ENCODE measurements at regions of chr12 and their contacts with region 1.

Region 1: GRCh38 chr12:93569656-93570551 is 2.6 kb upstream of the SOCS2 start:
- DNase-seq: peak; percentile 76
- ATAC-seq: peak; percentile 66
- H3K4me3 ChIP-seq: peak overlapping the region; percentile 90
- H3K27ac ChIP-seq: peak overlapping the region; percentile 61
- H3K4me1 ChIP-seq: peaks cover 16% of the 10 kb centered on the region
- H3K27me3 ChIP-seq: no peaks in the 10 kb centered on the region
- CTCF ChIP-seq: peak; percentile 69

Region 2: DNA sequence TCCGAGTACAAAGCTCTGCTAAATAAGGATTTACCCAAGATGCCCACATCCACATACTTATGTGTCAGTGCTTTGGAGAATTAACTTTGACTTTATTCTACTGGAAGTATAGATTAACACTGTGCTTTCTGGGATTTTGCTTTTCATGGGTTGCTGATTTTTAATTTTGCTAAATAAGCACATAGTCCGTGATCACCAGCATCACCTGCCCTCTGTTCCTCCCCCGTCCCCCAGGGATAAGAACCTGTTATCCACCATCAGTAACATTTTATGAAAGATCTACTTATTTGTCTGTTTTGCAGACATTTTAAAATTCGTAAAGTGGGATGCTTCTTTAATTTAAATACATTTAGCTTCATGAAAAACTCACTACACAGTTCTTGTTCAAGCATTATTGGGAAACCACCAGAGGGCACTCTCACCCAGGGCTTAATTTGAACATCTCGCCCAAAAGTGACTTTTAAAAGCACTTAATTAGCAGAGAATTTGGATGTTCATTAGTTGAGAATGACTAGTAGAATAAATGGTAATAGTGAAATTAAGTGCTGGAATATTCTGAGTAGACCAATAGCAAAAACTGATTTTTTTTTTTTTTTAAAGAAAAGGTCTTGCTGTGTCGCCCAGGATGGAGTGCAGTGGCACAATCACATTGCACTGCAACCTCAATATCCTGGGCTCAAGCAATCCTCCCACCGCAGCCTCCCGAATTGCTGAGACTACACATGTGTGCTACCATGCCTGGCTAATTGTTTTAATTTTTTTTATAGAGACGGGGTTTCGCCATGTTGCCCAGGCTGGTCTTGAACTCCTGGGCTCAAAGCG is 66.9 kb before region 1 on chr12:
- CTCF ChIA-PET with region 1: interaction called, 10 read pairs
- POLR2A ChIA-PET with region 1: no interaction called
- intact Hi-C with region 1: loop called (anchors 2 kb)
- DNase-seq: peak; percentile 65
- ATAC-seq: peak; percentile 33; the same call in 1 of the 2 replicates
- H3K4me3 ChIP-seq: no peak overlapping the region
- H3K27ac ChIP-seq: no peak overlapping the region
- H3K4me1 ChIP-seq: no peaks in the 10 kb centered on the region
- H3K27me3 ChIP-seq: no peaks in the 10 kb centered on the region
- CTCF ChIP-seq: peak; percentile 92

Region 3: DNA sequence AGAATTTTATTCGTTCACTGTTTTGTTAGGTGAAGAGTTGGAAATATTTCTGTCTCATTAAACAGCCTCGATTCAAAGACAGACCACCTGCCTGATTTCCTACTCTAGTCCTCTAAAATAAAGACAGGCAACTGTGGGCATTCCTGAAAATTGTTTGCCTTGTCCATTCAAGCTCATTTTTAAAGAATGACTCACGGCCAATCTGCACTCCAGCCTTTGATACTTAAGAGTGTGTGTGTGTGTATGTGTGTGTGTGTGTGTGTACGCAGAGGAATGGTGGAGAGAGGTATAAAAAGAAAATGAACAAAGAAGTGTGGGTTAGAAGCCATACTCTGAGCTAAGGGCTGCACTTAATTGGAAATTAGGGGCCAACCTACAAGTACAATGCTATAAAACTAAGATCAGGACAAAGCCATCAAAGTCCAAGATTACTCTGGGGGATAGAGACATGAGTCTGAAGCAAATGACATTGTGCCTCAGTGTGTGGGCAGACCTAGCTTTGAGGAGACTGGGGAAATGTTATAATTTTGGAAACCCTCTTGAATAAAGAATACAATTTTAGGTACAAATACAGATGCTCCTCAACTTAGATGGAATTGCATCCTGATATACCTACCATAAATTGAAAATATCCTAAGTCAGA is 43.0 kb before region 1 on chr12:
- CTCF ChIA-PET with region 1: no interaction called
- POLR2A ChIA-PET with region 1: no interaction called
- intact Hi-C with region 1: no loop called
- DNase-seq: peak; percentile 95
- ATAC-seq: peak; percentile 92
- H3K4me3 ChIP-seq: no peak overlapping the region; the same call in 1 of the 2 replicates
- H3K27ac ChIP-seq: no peak overlapping the region
- H3K4me1 ChIP-seq: peaks cover 21% of the 10 kb centered on the region
- H3K27me3 ChIP-seq: no peaks in the 10 kb centered on the region
- CTCF ChIP-seq: no peak

Region 4: DNA sequence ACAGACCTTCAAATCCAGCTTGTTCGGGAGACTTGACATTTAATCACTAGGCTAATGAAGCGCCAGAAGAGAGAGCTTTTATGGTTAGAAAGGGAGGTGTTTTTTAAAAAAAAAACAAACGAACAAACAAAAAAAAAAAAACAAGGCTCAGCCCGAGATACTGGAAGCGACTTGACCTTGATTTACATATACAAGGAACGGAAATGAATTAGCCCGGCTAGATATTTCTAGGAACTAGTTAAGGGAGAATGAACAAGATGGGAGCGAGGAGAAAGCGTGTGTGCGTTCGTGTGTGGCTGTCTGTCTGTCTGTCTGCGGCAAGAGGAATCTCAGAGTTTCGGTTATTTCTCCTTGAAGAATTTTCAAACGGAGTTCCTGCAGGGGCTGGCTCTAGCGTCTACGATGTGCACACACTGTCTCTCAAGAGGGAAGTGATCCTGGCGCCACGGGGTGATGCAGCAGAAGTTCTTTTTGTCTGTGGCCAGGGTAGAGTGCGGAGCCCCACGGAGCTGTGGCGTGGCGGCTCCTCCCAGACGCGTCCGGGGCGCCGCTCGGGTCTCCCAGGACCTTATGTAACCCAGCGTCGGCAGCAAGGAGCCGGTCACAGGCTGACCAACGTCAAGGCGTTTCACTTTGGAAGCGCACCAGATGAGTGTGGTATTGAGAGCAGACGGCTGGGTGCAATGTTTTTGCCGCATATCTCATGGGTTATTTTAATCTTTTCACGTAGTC is 21.4 kb after region 1 on chr12:
- CTCF ChIA-PET with region 1: no interaction called
- POLR2A ChIA-PET with region 1: no interaction called
- intact Hi-C with region 1: loop called (anchors 1 kb)
- DNase-seq: peak; percentile 68
- ATAC-seq: peak; percentile 95
- H3K4me3 ChIP-seq: peak overlapping the region; percentile 83
- H3K27ac ChIP-seq: peak overlapping the region; percentile 44
- H3K4me1 ChIP-seq: no peaks in the 10 kb centered on the region
- H3K27me3 ChIP-seq: no peaks in the 10 kb centered on the region
- CTCF ChIP-seq: no peak

Region 5: GRCh38 chr12:93624595-93625294 is 54.8 kb after region 1 on chr12:
- CTCF ChIA-PET with region 1: no interaction called
- POLR2A ChIA-PET with region 1: no interaction called
- intact Hi-C with region 1: loop called (anchors 1 kb)
- DNase-seq: peak; percentile 95
- ATAC-seq: peak; percentile 85
- H3K4me3 ChIP-seq: peak overlapping the region; percentile 7; the same call in 1 of the 2 replicates
- H3K27ac ChIP-seq: peak overlapping the region; percentile 93
- H3K4me1 ChIP-seq: peaks cover 36% of the 10 kb centered on the region
- H3K27me3 ChIP-seq: no peaks in the 10 kb centered on the region
- CTCF ChIP-seq: no peak

Region 6: GRCh38 chr12:93677195-93678064 is 107.5 kb after region 1 on chr12 and contains the start of gene CRADD:
- CTCF ChIA-PET with region 1: no interaction called
- POLR2A ChIA-PET with region 1: no interaction called
- intact Hi-C with region 1: loop called (anchors 2 kb)
- DNase-seq: peak; percentile 95
- ATAC-seq: peak; percentile 90
- H3K4me3 ChIP-seq: peak within 1 kb of the TSS; percentile 88
- H3K27ac ChIP-seq: peak within 1 kb of the TSS; percentile 94
- H3K4me1 ChIP-seq: peaks cover 15% of the 10 kb centered on the region
- H3K27me3 ChIP-seq: no peaks in the 10 kb centered on the region
- CTCF ChIP-seq: no peak
- total RNA-seq, gene CRADD: 11.4 and 12.5 TPM in 2 replicates

Region 7: GRCh38 chr12:93742110-93742934 is 172.4 kb after region 1 on chr12:
- CTCF ChIA-PET with region 1: interaction called, 11 read pairs
- POLR2A ChIA-PET with region 1: interaction called, 5 read pairs
- intact Hi-C with region 1: loop called (anchors 1 kb)
- DNase-seq: peak; percentile 76
- ATAC-seq: peak; percentile 95
- H3K4me3 ChIP-seq: peak overlapping the region; percentile 81
- H3K27ac ChIP-seq: peak overlapping the region; percentile 78
- H3K4me1 ChIP-seq: peaks cover 22% of the 10 kb centered on the region
- H3K27me3 ChIP-seq: no peaks in the 10 kb centered on the region
- CTCF ChIP-seq: peak; percentile 50; the same call in 1 of the 2 replicates

Region 8: GRCh38 chr12:93766796-93767523 is 197.1 kb after region 1 on chr12:
- CTCF ChIA-PET with region 1: interaction called, 5 read pairs
- POLR2A ChIA-PET with region 1: no interaction called
- intact Hi-C with region 1: loop called (anchors 1 kb)
- DNase-seq: peak; percentile 85
- ATAC-seq: peak; percentile 88
- H3K4me3 ChIP-seq: no peak overlapping the region
- H3K27ac ChIP-seq: no peak overlapping the region
- H3K4me1 ChIP-seq: peaks cover 15% of the 10 kb centered on the region; the same call in 1 of the 2 replicates
- H3K27me3 ChIP-seq: no peaks in the 10 kb centered on the region
- CTCF ChIP-seq: peak; percentile 93

Measured in PC-3 (cell line).